Activated naive CD4-positive, alpha-beta T cell treated with anti-CD3 and anti-CD28 coated beads for 36 hours (primary cell): ENCODE measurements at regions of chr19 and their contacts with region 1.

Region 1: GRCh38 chr19:56314562-56315077 is at the start of gene ZSCAN5A:
- DNase-seq: peak; percentile 97
- H3K4me3 Mint-ChIP-seq: peak within 1 kb of the TSS; percentile 82
- H3K27ac Mint-ChIP-seq: peak within 1 kb of the TSS; percentile 96
- H3K4me1 Mint-ChIP-seq: peaks cover 22% of the 10 kb centered on the region
- H3K27me3 Mint-ChIP-seq: no peaks in the 10 kb centered on the region
- total RNA-seq, gene ZSCAN5A: 3.7 to 4.1 TPM

Region 2: GRCh38 chr19:56080669-56081401 is 233.8 kb before region 1 on chr19:
- CTCF ChIA-PET with region 1: no interaction called
- intact Hi-C with region 1: loop called (anchors 10 kb)
- DNase-seq: peak; percentile 84
- H3K4me3 Mint-ChIP-seq: peak overlapping the region; percentile 41
- H3K27ac Mint-ChIP-seq: no peak overlapping the region
- H3K4me1 Mint-ChIP-seq: peaks cover 10% of the 10 kb centered on the region
- H3K27me3 Mint-ChIP-seq: peaks cover 17% of the 10 kb centered on the region

Region 3: GRCh38 chr19:56140583-56141416 is 173.8 kb before region 1 on chr19 and contains the start of gene ZNF444:
- CTCF ChIA-PET with region 1: no interaction called
- intact Hi-C with region 1: loop called (anchors 1 kb)
- DNase-seq: peak; percentile 99
- H3K4me3 Mint-ChIP-seq: peak within 1 kb of the TSS; percentile 97
- H3K27ac Mint-ChIP-seq: peak within 1 kb of the TSS; percentile 95
- H3K4me1 Mint-ChIP-seq: peaks cover 35% of the 10 kb centered on the region
- H3K27me3 Mint-ChIP-seq: no peaks in the 10 kb centered on the region
- total RNA-seq, gene ZNF444: 17.8 to 21.4 TPM

Region 4: DNA sequence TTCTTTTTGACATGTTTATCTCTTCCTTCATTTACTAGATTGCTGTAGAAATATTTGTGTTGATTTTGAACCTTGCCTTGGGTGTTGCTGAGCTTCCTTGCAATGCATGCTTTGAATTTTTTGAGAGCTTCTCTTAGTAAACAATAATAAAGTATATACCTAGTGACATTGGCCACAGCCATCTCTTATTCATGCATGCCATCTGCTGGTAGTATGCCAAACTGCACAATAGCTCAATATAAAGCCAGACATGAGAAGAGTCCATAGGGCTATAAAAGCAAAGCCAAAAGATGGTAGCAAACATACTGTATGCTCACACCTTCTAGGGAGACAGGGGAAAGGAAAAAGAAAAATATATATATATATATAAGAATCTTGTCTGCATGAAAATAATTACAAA is 18.9 kb after region 1 on chr19:
- CTCF ChIA-PET with region 1: interaction called, 12 read pairs
- intact Hi-C with region 1: no loop called
- DNase-seq: peak; percentile 66
- H3K4me3 Mint-ChIP-seq: no peak overlapping the region
- H3K27ac Mint-ChIP-seq: no peak overlapping the region
- H3K4me1 Mint-ChIP-seq: no peaks in the 10 kb centered on the region
- H3K27me3 Mint-ChIP-seq: no peaks in the 10 kb centered on the region

Region 5: DNA sequence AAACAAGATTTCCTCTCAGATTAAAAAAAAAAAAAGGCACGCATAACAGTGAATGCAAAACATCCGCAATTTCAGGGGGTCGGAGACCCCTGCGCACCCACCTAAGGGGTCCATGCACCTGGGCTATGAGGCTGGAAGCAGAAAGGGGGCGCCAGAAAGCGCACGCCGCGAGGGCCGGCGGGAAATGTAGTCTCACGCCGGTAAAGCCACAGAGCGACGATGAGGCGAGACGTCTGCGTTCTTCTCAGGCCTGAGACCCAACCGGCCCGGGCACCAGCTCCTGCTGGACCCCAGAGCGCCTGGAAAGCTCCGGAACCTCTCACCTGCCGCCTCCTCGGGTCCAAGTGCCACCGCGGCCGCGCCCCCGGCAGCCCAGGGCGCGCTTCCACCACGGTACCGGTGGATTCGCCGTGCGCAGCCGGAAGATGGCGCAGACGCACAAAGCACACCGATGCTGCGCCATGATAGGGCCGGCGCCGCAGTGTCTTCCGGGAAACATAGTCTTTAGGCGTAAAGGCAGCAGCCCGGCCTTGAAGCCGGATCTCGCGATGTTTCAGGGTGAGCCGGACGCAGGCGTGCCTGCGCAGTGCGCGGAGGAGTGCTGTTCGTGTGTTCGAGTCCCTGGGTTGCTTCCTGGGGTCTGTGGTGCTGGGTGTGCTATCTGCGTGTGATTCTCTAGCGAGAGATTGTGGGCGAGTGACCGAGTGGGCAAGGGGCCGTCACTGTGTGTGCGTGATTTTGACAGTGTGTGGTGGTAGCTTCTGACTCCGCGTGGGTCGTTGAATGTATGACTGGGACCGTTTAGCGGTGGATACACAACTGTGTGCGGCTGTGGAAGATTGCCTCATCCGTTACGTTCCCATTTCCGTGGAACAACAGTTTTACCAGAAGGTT is 78.7 kb after region 1 on chr19 and contains the start of gene ZNF582:
- CTCF ChIA-PET with region 1: no interaction called
- intact Hi-C with region 1: loop called (anchors 1 kb)
- DNase-seq: peak; percentile 96
- H3K4me3 Mint-ChIP-seq: peak within 1 kb of the TSS; percentile 87
- H3K27ac Mint-ChIP-seq: peak within 1 kb of the TSS; percentile 92
- H3K4me1 Mint-ChIP-seq: peaks cover 12% of the 10 kb centered on the region
- H3K27me3 Mint-ChIP-seq: no peaks in the 10 kb centered on the region
- total RNA-seq, gene ZNF582: 1.1 to 2.2 TPM

Region 6: GRCh38 chr19:57338877-57339276 is 1024.3 kb after region 1 on chr19:
- CTCF ChIA-PET with region 1: no interaction called
- intact Hi-C with region 1: no loop called
- DNase-seq: no peak
- H3K4me3 Mint-ChIP-seq: no peak overlapping the region
- H3K27ac Mint-ChIP-seq: no peak overlapping the region
- H3K4me1 Mint-ChIP-seq: no peaks in the 10 kb centered on the region
- H3K27me3 Mint-ChIP-seq: no peaks in the 10 kb centered on the region